ENCODE measurements at regions of chr9 and their contacts with region 1.

Region 1: DNA sequence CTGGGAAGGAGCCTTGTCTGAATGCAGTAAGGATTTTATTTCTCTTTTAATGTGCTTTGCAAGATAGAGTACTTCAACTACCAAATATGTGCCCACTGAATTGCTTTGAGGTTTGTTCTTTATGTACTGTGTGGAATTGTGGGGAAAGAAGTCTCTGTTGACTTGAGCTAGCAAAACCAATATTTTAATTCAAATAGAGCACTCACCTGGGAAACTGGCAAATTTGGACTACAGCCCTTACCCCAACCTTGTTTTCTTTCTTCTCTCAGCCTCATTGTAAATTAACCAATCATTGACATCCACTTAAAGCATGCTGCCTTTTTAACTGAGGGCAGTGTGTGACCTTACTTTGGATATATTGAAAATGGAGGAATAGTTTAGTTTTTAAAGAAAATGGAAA is 409.0 kb downstream of the SPATA31D1 start:
- DNase-seq: no peak
- ATAC-seq: no peak
- H3K4me3 ChIP-seq: no peak overlapping the region
- H3K27ac ChIP-seq: no peak overlapping the region
- H3K4me1 ChIP-seq: no peaks in the 10 kb centered on the region
- H3K27me3 ChIP-seq: no peaks in the 10 kb centered on the region
- CTCF ChIP-seq: no peak
- EP300 ChIP-seq: no peak
- POLR2A ChIP-seq: no peak
- RAD21 ChIP-seq: no peak

Region 2: GRCh38 chr9:82363198-82363597 is 34.3 kb before region 1 on chr9:
- CTCF ChIA-PET with region 1: no interaction called
- POLR2A ChIA-PET with region 1: no interaction called
- in situ Hi-C with region 1: no loop called
- intact Hi-C with region 1: no loop called
- DNase-seq: no peak
- ATAC-seq: no peak
- H3K4me3 ChIP-seq: no peak overlapping the region
- H3K27ac ChIP-seq: no peak overlapping the region
- H3K4me1 ChIP-seq: no peaks in the 10 kb centered on the region
- H3K27me3 ChIP-seq: no peaks in the 10 kb centered on the region
- CTCF ChIP-seq: no peak
- EP300 ChIP-seq: no peak
- POLR2A ChIP-seq: no peak
- RAD21 ChIP-seq: no peak

Region 3: GRCh38 chr9:83154087-83154736 is 756.7 kb after region 1 on chr9:
- CTCF ChIA-PET with region 1: no interaction called
- POLR2A ChIA-PET with region 1: no interaction called
- in situ Hi-C with region 1: no loop called
- intact Hi-C with region 1: loop called (anchors 10 kb)
- DNase-seq: no peak
- ATAC-seq: no peak; the same call in 2 of the 3 replicates
- H3K4me3 ChIP-seq: no peak overlapping the region
- H3K27ac ChIP-seq: no peak overlapping the region
- H3K4me1 ChIP-seq: no peaks in the 10 kb centered on the region
- H3K27me3 ChIP-seq: no peaks in the 10 kb centered on the region
- CTCF ChIP-seq: no peak
- EP300 ChIP-seq: no peak
- POLR2A ChIP-seq: no peak
- RAD21 ChIP-seq: no peak